ENCODE measurements at regions of chr20 and their contacts with region 1.

Region 1: DNA sequence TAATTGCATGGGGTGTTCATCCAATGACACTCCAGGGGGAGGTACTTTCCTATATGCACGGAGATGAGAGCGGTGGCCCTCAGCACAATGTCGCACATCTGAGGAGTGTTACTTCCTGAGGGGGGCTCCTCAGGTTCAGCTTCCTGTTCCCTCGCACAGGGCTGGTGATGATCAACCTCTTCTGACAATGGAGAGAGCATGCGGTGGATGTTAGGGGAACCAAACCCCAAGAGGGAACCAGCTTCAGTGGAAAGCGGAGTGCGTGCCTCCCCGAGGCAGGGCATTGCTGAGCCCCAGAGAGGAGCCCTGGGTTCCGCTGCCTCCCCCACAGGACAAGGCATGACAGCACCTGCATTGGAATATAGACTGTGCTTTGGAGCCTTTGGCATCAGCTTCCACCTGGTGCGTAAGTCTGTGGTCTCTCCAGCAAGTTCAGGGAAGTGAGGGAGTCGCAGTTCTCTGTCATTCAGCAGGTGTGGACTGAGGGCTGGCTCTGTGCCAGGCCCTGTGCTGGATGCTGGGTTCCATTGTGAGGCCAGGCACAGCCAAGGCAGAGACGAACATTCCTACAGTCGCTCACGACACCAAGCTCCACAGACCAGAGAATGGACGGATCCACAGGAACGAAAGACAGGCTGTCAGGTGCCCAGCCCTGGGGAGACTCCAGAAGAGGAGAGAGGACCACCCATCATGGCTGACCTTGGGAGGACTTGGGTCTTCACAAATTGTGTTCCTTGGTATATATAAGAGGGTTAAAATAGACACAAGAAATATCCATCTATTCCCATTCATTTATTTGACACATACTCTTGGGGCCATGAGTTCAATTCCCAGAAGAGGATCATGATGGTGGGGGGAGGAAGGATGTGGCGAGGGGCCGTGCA is 3.9 kb upstream of the ZNF831 start:
- DNase-seq: peak; percentile 86
- H3K4me3 Mint-ChIP-seq: peak overlapping the region; percentile 83
- H3K27ac Mint-ChIP-seq: peak overlapping the region; percentile 97
- H3K4me1 Mint-ChIP-seq: peaks cover 68% of the 10 kb centered on the region
- H3K27me3 Mint-ChIP-seq: no peaks in the 10 kb centered on the region

Region 2: GRCh38 chr20:58890518-58891085 is 269.1 kb before region 1 on chr20:
- intact Hi-C with region 1: loop called (anchors 5 kb)
- DNase-seq: peak; percentile 87
- H3K4me3 Mint-ChIP-seq: peak overlapping the region; percentile 94
- H3K27ac Mint-ChIP-seq: peak overlapping the region; percentile 97
- H3K4me1 Mint-ChIP-seq: peaks cover 38% of the 10 kb centered on the region
- H3K27me3 Mint-ChIP-seq: no peaks in the 10 kb centered on the region

Region 3: GRCh38 chr20:59047938-59048680 is 111.6 kb before region 1 on chr20:
- intact Hi-C with region 1: loop called (anchors 5 kb)
- DNase-seq: peak; percentile 56
- H3K4me3 Mint-ChIP-seq: no peak overlapping the region
- H3K27ac Mint-ChIP-seq: peak overlapping the region; percentile 26
- H3K4me1 Mint-ChIP-seq: peaks cover 20% of the 10 kb centered on the region
- H3K27me3 Mint-ChIP-seq: peaks cover 16% of the 10 kb centered on the region

Region 4: DNA sequence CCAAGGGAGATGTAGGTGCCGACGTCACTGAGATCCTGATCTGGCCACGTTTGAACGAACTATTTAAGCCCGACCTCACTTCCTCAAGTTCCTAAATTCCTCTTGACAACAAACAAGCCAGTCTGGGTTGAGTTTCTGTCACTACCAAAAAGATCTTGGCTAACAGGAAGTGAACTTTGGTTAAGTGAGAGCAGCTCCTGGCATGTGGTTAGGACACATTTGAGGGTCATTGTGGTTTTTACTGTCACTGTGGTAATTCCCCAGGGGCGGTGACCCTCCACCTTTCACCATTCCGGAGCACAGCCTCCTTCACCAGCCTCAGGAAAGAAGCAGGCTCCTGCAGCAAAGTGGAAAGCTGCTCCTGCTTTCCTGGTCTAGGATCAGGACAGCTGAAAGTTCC is 39.2 kb before region 1 on chr20:
- intact Hi-C with region 1: no loop called
- DNase-seq: peak; percentile 75
- H3K4me3 Mint-ChIP-seq: peak overlapping the region; percentile 6
- H3K27ac Mint-ChIP-seq: peak overlapping the region; percentile 10
- H3K4me1 Mint-ChIP-seq: peaks cover 52% of the 10 kb centered on the region
- H3K27me3 Mint-ChIP-seq: peaks cover 3% of the 10 kb centered on the region

Region 5: DNA sequence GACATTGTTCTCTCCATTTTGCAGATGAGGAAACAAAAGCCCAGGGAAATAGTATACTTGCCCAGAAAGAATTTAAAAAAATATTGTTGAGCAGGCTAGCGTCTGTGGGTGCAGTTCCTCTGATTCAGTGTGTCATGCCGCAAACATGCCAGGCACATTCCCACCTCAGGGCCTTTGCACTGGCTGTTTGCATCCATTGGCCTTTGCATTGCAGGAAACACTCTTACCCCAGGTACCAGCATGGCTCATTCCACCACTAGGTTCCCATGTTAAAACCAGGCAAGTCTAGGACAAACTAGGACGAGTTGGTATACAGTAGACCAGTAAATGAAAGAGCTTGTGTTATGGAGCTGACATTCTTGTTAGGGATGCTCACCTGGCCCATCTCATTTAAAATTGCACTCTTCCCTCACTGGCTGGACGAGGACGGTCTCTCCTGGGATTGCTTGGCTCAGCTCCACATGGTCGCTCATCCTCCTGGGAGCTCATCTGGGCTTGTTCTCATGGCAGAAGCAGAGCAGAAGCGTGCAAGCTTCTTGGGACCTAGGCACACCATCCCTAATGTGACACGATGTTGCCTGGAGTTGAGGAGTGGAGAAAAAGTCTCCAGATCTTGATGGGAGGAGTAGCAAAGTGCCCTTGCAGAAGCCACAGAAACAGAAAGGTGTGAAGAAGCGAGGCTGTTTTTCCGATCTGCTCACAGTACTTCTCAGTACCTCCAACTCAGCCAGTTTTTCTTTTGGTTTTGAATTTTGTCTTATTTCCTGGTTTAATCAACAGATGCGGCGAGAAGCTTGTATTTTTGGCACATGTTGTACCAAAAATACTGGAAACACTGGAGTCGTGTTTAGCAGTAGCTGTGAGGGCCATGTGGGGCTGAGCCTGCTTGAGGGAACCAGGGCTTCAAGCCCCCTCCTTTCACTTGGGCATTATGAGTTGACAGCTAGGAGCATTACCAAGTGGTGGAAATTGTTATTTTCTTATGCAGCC is 17.8 kb after region 1 on chr20:
- intact Hi-C with region 1: loop called (anchors 2 kb)
- DNase-seq: peak; percentile 83
- H3K4me3 Mint-ChIP-seq: peak overlapping the region; percentile 63
- H3K27ac Mint-ChIP-seq: peak overlapping the region; percentile 95
- H3K4me1 Mint-ChIP-seq: peaks cover 60% of the 10 kb centered on the region
- H3K27me3 Mint-ChIP-seq: peaks cover 1% of the 10 kb centered on the region

Region 6: DNA sequence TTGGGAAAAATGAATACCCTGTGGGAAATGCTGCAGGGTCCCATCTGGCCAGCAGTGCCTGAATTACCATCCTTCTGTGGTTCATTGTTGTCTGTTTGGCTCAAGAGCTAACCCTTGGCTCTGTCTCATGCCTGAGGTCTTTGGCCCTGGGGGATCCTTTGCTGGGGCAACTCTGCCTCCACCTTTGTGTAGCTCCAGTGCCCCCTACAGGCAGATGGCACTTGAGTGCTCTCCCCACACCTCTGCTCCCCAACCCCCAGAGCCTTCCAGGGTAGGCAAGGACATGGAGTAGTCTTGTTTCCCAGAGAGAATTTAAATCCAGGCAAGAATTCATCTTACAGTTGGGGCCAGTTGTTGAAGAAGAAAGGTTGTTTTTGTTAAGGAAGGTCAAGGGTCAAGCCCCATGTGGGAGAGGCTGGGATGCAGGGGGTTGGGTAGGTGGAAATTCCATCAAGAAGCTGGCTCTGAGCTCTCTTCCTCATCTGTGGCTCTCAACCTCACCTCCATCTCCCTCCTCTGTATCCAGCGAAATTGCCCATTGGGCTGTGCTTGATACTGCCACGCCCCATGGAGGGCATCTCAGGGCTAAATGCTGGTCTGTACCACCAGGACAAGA is 48.1 kb after region 1 on chr20:
- intact Hi-C with region 1: loop called (anchors 5 kb)
- DNase-seq: peak; percentile 93
- H3K4me3 Mint-ChIP-seq: no peak overlapping the region
- H3K27ac Mint-ChIP-seq: no peak overlapping the region
- H3K4me1 Mint-ChIP-seq: peaks cover 4% of the 10 kb centered on the region
- H3K27me3 Mint-ChIP-seq: no peaks in the 10 kb centered on the region

Region 7: DNA sequence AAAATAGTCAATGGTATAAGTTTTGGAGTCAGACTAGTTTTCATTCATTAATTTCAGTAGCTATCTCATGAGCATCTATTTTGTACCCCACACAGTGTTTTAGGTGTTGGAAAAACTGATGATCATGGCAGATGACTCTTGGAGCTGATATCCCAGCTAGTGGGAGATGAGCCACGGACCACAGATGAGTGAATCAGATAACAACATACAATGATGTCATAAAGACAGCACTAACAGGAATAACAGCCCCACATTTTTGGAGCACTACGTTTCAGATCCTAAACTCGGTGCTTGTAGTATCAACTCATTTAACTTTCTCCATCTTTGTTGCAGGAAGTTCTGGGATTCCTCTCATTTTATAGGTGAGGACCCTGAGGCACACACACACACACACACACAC is 72.9 kb after region 1 on chr20:
- intact Hi-C with region 1: no loop called
- DNase-seq: no peak
- H3K4me3 Mint-ChIP-seq: no peak overlapping the region
- H3K27ac Mint-ChIP-seq: no peak overlapping the region
- H3K4me1 Mint-ChIP-seq: peaks cover 7% of the 10 kb centered on the region
- H3K27me3 Mint-ChIP-seq: no peaks in the 10 kb centered on the region

Region 8: DNA sequence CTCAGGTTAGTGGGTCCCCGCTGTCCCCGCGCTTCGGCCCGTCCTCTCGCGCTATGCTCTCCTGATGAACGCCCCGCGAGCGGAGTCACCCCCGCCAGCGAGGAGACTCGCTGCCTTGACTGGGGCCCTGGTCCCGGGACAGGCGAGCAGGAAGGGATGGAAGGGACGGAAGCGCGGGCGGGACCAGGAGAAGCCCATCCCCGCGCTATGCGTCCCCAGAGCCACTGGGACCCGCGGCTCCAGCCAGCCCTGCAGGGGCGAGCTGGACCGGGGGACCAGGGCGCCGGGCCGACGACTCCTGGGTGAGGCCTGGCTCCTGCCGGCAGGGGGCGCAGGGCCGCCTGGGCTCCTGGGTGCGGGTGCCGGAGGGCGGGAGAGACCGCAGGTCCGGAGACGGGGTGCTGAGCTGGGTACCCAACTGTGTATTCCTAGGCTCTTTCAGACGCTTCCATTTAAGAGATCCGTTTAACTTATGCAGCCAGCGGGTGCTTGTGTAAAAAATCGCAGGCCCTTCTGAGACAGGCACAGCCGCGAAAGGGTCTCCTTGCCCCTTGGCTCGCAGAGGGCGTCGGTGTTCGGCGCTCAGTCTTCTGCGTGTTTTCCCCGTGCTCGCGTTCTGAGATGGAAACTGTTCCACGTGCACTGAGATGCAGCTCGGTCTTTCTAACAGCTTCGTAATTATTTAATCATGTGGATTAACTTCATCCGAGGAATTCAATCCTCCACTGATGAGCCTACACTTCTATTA is 774.3 kb after region 1 on chr20:
- intact Hi-C with region 1: loop called (anchors 10 kb)
- DNase-seq: peak; percentile 95
- H3K4me3 Mint-ChIP-seq: peak overlapping the region; percentile 82
- H3K27ac Mint-ChIP-seq: peak overlapping the region; percentile 53
- H3K4me1 Mint-ChIP-seq: peaks cover 28% of the 10 kb centered on the region
- H3K27me3 Mint-ChIP-seq: peaks cover 2% of the 10 kb centered on the region

Region 9: DNA sequence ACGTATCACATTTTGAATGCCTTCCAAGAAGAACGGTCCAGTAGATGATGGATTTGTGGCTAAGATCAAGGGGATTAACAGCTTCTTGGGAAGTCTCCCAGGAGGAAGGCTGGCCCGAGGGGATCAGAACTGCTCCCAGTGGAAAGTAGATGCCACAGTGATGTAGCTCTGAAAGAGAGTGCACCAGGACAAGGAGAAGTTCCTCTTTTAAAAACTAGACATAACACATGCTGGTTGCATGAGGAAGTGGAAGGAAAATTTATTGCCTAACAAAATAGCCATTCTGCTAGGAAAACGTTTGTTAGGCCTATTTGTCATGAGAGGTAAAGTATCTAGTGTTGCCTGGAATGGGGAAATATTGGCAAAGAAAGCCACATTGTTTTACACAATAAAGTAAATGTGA is 886.3 kb after region 1 on chr20:
- intact Hi-C with region 1: no loop called
- DNase-seq: no peak
- H3K4me3 Mint-ChIP-seq: no peak overlapping the region
- H3K27ac Mint-ChIP-seq: no peak overlapping the region
- H3K4me1 Mint-ChIP-seq: no peaks in the 10 kb centered on the region
- H3K27me3 Mint-ChIP-seq: peaks cover 13% of the 10 kb centered on the region